ENCODE measurements at regions of chr1 and their contacts with region 1.

Region 1: GRCh38 chr1:86950712-86951419 is 36.4 kb downstream of the HS2ST1 start:
- DNase-seq: no peak
- ATAC-seq: no peak
- H3K4me3 Mint-ChIP-seq: no peak overlapping the region
- H3K27ac Mint-ChIP-seq: no peak overlapping the region
- H3K4me1 Mint-ChIP-seq: peaks cover 18% of the 10 kb centered on the region
- H3K27me3 Mint-ChIP-seq: no peaks in the 10 kb centered on the region
- CTCF ChIP-seq: no peak

Region 2: DNA sequence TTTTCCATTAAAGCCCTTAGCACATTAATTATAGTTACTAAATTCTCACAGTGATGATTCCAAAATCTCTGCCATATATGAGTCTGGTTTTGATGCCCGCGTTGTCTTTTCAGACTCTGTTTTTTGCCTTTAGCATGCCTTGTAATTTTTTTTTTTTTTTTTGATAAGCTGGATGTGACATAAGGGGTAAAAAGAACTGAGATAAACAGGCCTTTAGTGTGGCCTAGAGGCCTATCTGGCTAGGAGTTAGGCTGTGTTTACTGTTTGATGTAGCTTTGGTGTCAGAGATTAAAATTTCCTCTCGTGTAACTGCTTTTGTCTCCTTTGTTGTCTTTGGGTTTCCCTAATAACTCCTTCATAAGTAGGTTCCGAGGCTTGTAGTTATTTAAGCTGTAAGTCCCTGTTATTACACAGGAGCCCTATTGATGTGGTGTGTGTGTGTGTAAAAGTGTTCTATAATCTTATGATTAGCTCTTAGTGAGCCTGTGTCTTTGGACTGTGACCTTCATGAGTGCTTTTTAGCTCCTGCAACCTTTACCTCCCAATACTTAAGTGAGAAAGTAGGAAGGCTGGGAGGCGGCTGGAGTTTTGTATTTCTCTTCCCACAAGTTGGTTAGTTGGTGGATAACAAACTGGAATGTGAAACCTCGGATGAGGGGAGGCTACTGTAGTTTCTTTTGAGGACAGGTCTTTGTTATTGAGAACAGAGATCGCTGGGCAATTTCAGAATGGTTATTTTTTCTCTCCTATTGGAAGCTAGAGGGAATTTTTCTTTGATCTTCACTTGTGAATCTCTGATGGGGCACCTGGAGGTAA is 17.1 kb before region 1 on chr1:
- CTCF ChIA-PET with region 1: no interaction called
- POLR2A ChIA-PET with region 1: interaction called, 3 read pairs
- intact Hi-C with region 1: loop called (anchors 2 kb)
- DNase-seq: no peak
- ATAC-seq: no peak
- H3K4me3 Mint-ChIP-seq: no peak overlapping the region
- H3K27ac Mint-ChIP-seq: no peak overlapping the region
- H3K4me1 Mint-ChIP-seq: peaks cover 21% of the 10 kb centered on the region
- H3K27me3 Mint-ChIP-seq: no peaks in the 10 kb centered on the region
- CTCF ChIP-seq: no peak

Region 3: GRCh38 chr1:87045761-87046304 is 95.0 kb after region 1 on chr1:
- CTCF ChIA-PET with region 1: no interaction called
- POLR2A ChIA-PET with region 1: no interaction called
- intact Hi-C with region 1: no loop called
- DNase-seq: no peak
- ATAC-seq: peak; percentile 78
- H3K4me3 Mint-ChIP-seq: peak overlapping the region; percentile 1
- H3K27ac Mint-ChIP-seq: peak overlapping the region; percentile 87
- H3K4me1 Mint-ChIP-seq: peaks cover 45% of the 10 kb centered on the region
- H3K27me3 Mint-ChIP-seq: no peaks in the 10 kb centered on the region
- CTCF ChIP-seq: no peak